K562 (cell line): ENCODE measurements at regions of chr10 and their contacts with region 1.

Region 1: DNA sequence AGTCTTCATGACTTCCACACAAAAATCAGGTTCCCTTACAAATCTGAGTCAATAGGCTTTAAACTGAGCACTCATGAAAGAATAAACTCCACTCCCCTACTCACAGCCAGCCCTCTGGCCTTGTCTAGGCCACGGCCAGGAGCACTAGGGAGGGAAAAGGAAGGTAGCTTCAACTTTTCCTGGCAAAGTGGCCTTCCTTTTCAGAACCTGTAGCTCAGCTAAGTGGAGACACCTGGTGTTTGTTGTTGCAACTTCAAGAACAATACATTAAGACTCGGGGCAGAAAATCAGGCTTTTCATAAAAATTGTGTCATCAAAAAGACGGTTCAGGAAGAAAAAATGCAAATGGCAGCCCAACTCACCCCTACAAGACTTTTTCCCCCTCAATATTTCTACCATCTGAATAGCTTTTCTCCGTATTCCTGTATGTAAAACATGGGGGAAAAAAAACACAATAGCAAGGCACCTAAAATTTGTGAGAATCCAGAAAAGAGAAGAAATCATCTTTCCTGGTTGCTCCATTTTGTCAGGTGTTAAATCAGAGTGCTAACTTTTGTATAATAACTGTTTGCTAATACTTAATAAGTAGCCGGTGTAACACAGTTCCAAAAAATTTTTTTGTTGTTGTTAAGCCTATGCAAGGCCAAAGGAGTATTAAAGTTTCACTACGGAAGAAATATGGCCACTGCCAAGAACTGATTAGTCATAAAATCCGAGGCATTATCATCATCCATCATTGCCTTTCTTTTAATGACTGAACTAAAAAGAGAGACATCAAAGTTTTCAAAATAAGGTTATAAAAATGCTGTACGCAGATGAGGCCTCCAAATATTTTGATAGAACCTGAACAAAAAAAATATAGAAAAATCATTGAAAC is 66.2 kb upstream of the ARID5B start:
- DNase-seq: peak; percentile 56 to 89 (median 66)
- ATAC-seq: peak; percentile 82
- H3K4me3 ChIP-seq: no peak overlapping the region
- H3K27ac ChIP-seq: no peak overlapping the region; the same call in 2 of the 3 replicates
- H3K4me1 ChIP-seq: peaks cover 8 to 29% of the 10 kb centered on the region in 2 experiments; a peak in 4 of 5 replicates
- H3K27me3 ChIP-seq: no peaks in the 10 kb centered on the region
- CTCF ChIP-seq: peak; percentile 75 to 86 (median 76)
- EP300 ChIP-seq: no peak
- POLR2A ChIP-seq: no peak
- RAD21 ChIP-seq: peak; percentile 95 to 99

Region 2: DNA sequence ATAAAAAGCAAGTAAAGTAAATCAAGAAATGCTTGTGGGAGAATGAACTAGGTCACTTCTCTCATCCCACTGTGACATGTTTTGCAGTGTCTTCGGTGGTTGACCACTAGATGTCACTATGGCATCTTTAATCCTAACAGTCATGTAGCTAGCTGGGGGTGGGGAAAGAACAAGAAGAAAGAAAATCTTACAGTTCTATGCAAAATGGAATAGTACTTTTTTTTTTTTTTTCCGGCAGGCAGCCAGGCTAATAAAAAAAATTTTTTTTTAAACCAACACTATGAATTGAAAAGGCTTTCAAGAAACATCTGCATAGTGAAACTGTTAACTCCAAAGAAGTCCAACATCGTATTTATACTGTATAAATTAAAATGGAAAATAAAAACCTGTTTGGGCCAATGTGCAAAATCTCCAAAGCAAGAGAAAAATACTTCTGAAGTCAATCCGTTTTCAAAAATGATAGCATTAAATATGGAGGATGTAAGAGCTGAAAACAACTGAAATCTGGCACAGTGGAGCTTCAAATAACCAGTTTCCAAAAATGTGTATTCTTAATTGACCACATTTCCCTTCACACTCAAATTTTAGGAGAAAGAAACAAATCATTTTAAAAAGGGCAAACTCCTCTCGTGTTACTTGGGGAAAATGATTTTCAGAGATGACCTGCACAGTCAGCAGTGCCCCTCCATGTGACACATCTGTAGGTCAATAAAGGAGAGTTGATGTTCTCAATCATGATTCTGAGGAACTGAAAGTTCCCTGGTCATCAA is 1018.5 kb before region 1 on chr10:
- CTCF ChIA-PET with region 1: no interaction called
- POLR2A ChIA-PET with region 1: no interaction called
- in situ Hi-C with region 1: no loop called
- intact Hi-C with region 1: loop called (anchors 10 kb)
- DNase-seq: peak; percentile 87 to 89 (median 88)
- ATAC-seq: peak; percentile 95
- H3K4me3 ChIP-seq: no peak overlapping the region
- H3K27ac ChIP-seq: no peak overlapping the region
- H3K4me1 ChIP-seq: no peaks in the 10 kb centered on the region
- H3K27me3 ChIP-seq: no peaks in the 10 kb centered on the region
- CTCF ChIP-seq: peak; percentile 80 to 93 (median 82)
- EP300 ChIP-seq: no peak
- POLR2A ChIP-seq: no peak
- RAD21 ChIP-seq: peak; percentile 95 to 98

Region 3: DNA sequence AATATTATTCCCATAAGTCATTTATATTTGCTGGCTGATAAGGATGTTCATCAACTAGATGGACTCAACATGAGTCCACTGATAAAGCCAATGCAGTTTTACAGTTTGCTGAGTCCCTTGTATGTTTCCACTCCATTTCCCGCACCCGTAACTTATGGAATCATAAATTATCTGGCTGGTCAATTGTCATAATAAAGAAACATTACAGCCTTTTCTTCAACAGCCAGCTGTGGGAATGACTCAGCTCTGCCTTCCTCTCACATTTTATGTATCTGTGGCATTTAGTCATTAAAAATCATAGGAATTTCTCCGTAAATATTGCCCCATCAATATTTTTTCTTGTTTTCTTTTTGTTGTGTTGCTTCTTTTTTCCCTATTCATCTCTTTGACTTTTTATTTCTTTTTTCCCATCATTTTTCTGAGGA is 359.8 kb before region 1 on chr10:
- CTCF ChIA-PET with region 1: no interaction called
- POLR2A ChIA-PET with region 1: no interaction called
- in situ Hi-C with region 1: no loop called
- intact Hi-C with region 1: loop called (anchors 2 kb)
- DNase-seq: peak in 2 of 4 experiments; percentile 63 to 79
- ATAC-seq: peak; percentile 67
- H3K4me3 ChIP-seq: no peak overlapping the region
- H3K27ac ChIP-seq: peak overlapping the region; percentile 41; the same call in 1 of the 3 replicates
- H3K4me1 ChIP-seq: peaks cover 0 to 5% of the 10 kb centered on the region in 2 experiments; a peak in 2 of 5 replicates
- H3K27me3 ChIP-seq: no peaks in the 10 kb centered on the region
- CTCF ChIP-seq: no peak
- EP300 ChIP-seq: peak; percentile 81
- POLR2A ChIP-seq: no peak
- RAD21 ChIP-seq: no peak; a peak in 1 of 4 replicates

Region 4: DNA sequence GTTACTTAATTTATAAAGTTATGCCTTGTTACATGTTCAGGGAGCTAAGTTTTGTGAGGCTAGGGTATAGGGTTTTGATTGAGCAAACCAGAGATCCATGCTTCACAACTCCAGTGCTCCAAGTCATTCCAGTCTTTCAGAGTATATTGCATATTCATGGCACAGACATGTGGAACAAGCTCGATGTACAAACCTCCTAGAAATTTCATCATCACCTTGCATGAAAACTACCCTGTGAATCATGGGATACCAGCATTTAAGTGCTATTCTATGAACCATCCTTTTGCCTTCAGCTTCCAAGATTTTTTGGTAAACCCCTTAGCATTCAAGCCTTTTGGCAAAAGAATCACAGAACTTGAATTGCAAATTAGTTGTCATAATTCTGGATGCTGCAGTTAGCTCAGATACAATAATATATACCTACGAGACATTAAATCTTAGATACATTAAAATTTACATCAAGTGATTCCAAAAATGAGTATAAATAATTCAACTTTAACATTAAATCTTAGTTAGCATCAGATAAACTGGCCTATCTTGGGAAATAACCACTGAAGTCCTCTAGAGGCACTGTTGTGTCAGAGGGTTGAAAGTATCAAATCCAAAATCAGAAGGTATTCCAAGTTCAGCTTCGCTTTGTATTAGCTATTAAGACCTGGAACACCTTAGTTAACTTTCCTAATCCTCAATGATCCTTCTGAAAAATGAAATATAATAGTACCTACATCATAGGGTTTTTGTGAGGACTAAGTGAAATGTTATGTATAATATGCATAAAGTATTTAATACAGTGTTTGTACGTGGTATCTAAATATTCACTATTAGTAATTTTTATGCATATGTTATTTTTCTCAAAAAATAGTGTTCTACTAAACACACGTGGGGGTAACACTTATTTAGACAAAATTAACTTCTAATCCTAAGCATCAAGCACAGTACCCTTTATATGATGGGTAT is 228.1 kb before region 1 on chr10:
- CTCF ChIA-PET with region 1: no interaction called
- POLR2A ChIA-PET with region 1: no interaction called
- in situ Hi-C with region 1: no loop called
- intact Hi-C with region 1: loop called (anchors 5 kb)
- DNase-seq: peak; percentile 20 to 32 (median 27)
- ATAC-seq: peak; percentile 75
- H3K4me3 ChIP-seq: no peak overlapping the region
- H3K27ac ChIP-seq: no peak overlapping the region
- H3K4me1 ChIP-seq: no peaks in the 10 kb centered on the region
- H3K27me3 ChIP-seq: no peaks in the 10 kb centered on the region
- CTCF ChIP-seq: peak; percentile 47 to 65 (median 59); a peak in 5 of 6 replicates
- EP300 ChIP-seq: no peak
- POLR2A ChIP-seq: no peak
- RAD21 ChIP-seq: peak in 1 of 2 experiments; percentile 55; a peak in 3 of 4 replicates

Region 5: GRCh38 chr10:61655335-61655851 is 179.9 kb before region 1 on chr10:
- CTCF ChIA-PET with region 1: no interaction called
- POLR2A ChIA-PET with region 1: no interaction called
- in situ Hi-C with region 1: no loop called
- intact Hi-C with region 1: no loop called
- DNase-seq: no peak
- ATAC-seq: peak; percentile 64
- H3K4me3 ChIP-seq: no peak overlapping the region
- H3K27ac ChIP-seq: no peak overlapping the region
- H3K4me1 ChIP-seq: 0 out of 5 replicates have a peak, but pooled peaks cover 0 to 2% of the 10 kb centered on the region in 2 experiments
- H3K27me3 ChIP-seq: no peaks in the 10 kb centered on the region
- CTCF ChIP-seq: no peak
- EP300 ChIP-seq: peak; percentile 48; the same call in 1 of the 2 replicates
- POLR2A ChIP-seq: no peak
- RAD21 ChIP-seq: no peak; a peak in 1 of 4 replicates

Region 6: DNA sequence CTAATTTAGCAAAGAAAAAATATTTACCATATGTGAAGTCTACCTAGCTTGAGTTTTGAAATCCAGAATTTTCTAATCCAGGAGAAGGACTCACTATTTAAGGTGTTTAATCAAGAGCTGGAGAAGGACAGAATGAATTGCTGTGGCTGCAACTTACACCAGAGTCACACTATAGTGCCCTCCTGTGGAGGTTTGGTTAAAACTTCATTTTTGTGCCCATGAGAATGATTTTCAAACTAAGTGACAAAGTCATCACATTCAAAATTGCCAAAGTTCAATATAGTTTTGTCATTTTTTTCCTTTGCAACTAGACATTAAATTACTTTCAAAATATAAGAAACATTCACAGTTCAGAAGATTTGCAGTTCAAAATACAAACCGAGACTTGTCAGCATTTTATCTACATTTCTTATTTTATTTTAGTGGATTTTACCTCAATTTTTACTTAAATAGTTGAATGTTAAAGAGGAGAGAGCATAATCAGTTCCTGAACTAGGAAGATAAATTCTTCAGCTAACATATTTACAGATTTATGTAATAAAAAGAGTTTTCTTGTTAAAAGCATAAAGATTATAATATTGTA is 101.9 kb before region 1 on chr10:
- CTCF ChIA-PET with region 1: interaction called, 3 read pairs
- POLR2A ChIA-PET with region 1: no interaction called
- in situ Hi-C with region 1: no loop called
- intact Hi-C with region 1: loop called (anchors 5 kb)
- DNase-seq: peak; percentile 29 to 78 (median 38)
- ATAC-seq: peak; percentile 88
- H3K4me3 ChIP-seq: no peak overlapping the region
- H3K27ac ChIP-seq: no peak overlapping the region
- H3K4me1 ChIP-seq: 0 out of 5 replicates have a peak, but pooled peaks cover 0 to 4% of the 10 kb centered on the region in 2 experiments
- H3K27me3 ChIP-seq: no peaks in the 10 kb centered on the region
- CTCF ChIP-seq: peak; percentile 63 to 73 (median 65); a peak in 5 of 6 replicates
- EP300 ChIP-seq: no peak
- POLR2A ChIP-seq: no peak
- RAD21 ChIP-seq: peak; percentile 81 to 87

Region 7: DNA sequence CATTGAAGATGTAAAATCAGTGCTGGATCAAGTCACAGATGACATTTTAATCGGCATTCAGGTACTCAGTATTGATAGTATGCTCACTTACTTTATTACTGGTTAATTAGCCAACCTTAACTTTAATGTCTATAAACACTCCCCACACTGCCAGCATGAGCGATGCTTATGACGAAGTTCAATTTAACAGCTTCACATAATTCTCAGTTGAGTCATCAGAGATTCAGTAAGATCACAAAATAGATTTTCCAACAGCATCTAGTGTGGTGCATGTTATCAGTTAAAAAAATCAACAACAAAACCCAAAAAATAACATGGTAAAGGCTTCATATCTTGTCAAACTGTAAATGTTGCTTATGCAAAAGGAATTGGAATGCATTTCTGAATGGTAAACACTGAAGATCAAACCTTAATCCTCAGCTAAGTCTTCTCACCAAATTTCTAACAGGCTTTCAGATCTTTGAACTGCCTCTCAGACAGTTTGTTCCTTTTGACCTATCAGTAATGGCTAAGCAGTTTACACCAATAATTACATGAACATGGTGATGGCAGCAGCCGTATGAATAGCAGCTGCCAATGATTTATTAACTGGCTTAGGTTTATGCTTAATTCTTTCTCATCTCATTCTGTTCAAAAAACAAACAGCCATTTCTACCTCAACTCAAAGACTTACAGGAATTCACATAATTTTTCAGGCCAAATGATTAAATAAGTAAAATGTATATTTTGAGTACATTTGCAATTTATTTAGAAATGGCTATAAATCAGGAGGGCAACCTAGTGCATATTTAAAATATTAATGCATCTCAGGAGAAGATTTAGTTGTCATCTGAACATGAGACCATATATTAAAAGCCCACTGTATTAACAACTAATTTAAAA is 74.1 kb before region 1 on chr10:
- CTCF ChIA-PET with region 1: no interaction called
- POLR2A ChIA-PET with region 1: interaction called, 4 read pairs
- in situ Hi-C with region 1: no loop called
- intact Hi-C with region 1: loop called (anchors 1 kb)
- DNase-seq: peak in 1 of 4 experiments; percentile 41
- ATAC-seq: no peak
- H3K4me3 ChIP-seq: no peak overlapping the region
- H3K27ac ChIP-seq: peak overlapping the region; percentile 43
- H3K4me1 ChIP-seq: peaks cover 0 to 70% of the 10 kb centered on the region in 2 experiments; a peak in 4 of 5 replicates
- H3K27me3 ChIP-seq: no peaks in the 10 kb centered on the region; a peak in 1 of 5 replicates
- CTCF ChIP-seq: no peak
- EP300 ChIP-seq: no peak
- POLR2A ChIP-seq: no peak
- RAD21 ChIP-seq: 0 out of 4 replicates have a peak, but pooled peaks of 1 of the 2 experiments have one; percentile 6

Region 8: DNA sequence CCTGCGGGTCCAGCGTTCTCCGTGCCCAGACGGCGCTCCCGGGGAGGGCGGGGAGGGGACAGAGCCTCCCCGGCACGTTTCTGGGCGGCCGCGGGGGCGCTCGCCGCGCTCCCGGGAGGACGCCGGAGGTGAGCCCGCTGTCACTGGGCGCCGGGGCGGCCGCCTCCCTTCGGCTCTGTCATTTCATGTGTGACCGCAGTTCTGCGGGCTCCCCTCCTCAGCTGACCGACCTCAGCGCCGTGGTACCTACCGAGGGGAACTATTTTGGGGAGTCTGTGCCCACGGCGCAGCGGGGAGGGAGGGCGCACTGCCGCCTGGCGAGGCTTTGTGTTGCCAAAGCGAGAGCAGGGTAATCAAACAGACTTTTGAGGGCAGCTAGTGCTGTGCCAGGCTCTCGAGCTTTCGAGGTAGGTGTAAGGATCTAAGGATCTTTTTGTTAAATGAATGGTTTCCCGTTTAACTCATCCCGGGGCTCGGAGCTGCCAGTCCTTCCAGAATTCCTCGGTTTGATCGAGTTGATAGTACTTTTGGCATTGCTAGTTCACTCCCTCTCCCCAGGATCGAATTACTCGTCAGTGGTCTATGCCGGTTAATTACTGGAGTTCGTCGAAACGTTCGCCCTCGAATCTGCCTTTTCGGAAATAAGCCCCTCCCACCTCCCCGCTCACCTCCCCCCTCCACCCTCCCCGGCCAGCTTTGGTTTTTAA is 68.1 kb after region 1 on chr10:
- CTCF ChIA-PET with region 1: no interaction called
- POLR2A ChIA-PET with region 1: no interaction called
- in situ Hi-C with region 1: no loop called
- intact Hi-C with region 1: loop called (anchors 5 kb)
- DNase-seq: peak; percentile 69 to 80 (median 72)
- ATAC-seq: peak; percentile 85
- H3K4me3 ChIP-seq: peak overlapping the region; percentile 51
- H3K27ac ChIP-seq: peak overlapping the region; percentile 40; the same call in 2 of the 3 replicates
- H3K4me1 ChIP-seq: peaks cover 6 to 12% of the 10 kb centered on the region in 2 experiments
- H3K27me3 ChIP-seq: no peaks in the 10 kb centered on the region
- CTCF ChIP-seq: peak in 2 of 3 experiments; percentile 4 to 39; a peak in 3 of 6 replicates
- EP300 ChIP-seq: no peak
- POLR2A ChIP-seq: no peak
- RAD21 ChIP-seq: no peak

Region 9: DNA sequence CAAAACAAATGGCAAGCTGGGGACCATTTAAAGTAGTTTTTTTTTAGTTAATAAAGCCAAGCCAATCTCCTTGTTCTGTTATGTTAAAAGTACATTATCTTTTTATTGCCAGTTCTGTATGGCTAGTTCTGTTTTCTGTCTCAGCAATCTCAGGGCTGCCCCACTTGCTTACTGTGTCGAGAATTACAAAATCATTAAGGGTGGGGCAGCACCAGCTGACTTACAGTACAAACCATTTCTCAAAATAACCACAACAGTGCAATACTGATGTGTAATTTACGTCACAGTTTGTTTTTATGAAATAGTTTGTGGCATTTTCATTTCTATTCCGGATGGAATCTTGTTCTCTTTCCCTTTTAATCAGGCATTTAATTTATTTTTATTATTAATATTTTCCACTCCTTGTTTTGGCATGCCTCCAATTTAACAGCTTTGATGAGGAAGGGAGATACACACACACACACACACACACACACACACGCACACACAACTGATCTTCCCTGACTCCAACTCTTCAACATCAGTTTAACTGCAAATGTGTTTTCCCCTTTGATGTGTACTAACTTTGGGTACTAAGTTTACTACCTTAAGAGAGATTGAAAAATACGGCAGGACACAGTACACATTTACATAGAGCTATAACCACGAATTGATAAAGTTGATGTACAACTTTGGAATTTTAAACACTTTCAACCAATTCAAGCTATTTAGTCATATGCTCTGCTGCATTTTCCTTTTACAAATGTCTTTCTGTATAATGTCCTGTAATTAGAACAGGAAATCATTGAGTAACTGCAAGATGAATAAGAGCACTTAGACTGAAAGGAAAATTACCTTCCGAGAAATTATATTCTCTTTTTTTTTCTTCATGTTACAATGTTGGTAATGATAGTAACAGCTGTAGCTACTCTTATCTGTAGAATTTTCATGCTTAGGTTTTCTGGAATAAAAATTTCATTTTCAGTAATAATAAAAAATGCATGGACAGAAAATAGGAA is 157.7 kb after region 1 on chr10:
- CTCF ChIA-PET with region 1: no interaction called
- POLR2A ChIA-PET with region 1: no interaction called
- in situ Hi-C with region 1: no loop called
- intact Hi-C with region 1: no loop called
- DNase-seq: no peak
- ATAC-seq: no peak
- H3K4me3 ChIP-seq: no peak overlapping the region
- H3K27ac ChIP-seq: no peak overlapping the region
- H3K4me1 ChIP-seq: no peaks in the 10 kb centered on the region
- H3K27me3 ChIP-seq: no peaks in the 10 kb centered on the region; a peak in 1 of 5 replicates
- CTCF ChIP-seq: no peak
- EP300 ChIP-seq: no peak
- POLR2A ChIP-seq: no peak
- RAD21 ChIP-seq: no peak

Region 10: DNA sequence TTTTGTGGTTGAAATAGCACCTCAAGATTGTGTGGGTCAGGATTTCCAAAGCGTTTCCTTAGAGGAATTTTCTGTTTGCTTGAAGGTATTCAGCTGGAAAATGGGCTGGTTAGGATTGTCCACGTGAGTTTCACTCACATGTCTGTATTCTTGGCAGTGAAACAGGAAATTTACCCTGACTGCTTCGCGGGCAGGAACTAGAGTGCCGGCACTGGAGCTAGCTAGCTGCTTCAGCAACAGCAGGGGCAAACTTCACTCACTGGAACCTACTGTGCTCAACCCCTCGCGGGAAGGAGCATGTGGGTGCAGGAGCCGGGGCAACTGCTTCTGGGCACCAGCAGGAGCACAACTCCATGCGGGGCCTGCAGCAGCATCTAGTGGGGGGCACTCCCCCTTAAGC is 471.4 kb after region 1 on chr10:
- CTCF ChIA-PET with region 1: no interaction called
- POLR2A ChIA-PET with region 1: no interaction called
- in situ Hi-C with region 1: no loop called
- intact Hi-C with region 1: no loop called
- DNase-seq: no peak
- ATAC-seq: no peak
- H3K4me3 ChIP-seq: no peak overlapping the region
- H3K27ac ChIP-seq: no peak overlapping the region
- H3K4me1 ChIP-seq: no peaks in the 10 kb centered on the region
- H3K27me3 ChIP-seq: no peaks in the 10 kb centered on the region
- CTCF ChIP-seq: no peak
- EP300 ChIP-seq: no peak
- POLR2A ChIP-seq: no peak
- RAD21 ChIP-seq: no peak